Pancreas (tissue), 10 donors: ENCODE measurements at regions of chr10 and their contacts with region 1.

Region 1: GRCh38 chr10:94362360-94363250 is at the start of gene NOC3L:
- DNase-seq: peak; percentile 92 to 98 (median 95)
- ATAC-seq: peak; percentile 100
- H3K4me3 ChIP-seq: peak within 1 kb of the TSS; percentile 43 to 70 (median 64)
- H3K27ac ChIP-seq: peak within 1 kb of the TSS; percentile 25 to 66 (median 43)
- H3K4me1 ChIP-seq: peaks cover 4 to 14% (median 8%) of the 10 kb centered on the region in 3 donors
- H3K27me3 ChIP-seq: no peaks in the 10 kb centered on the region
- CTCF ChIP-seq: peak; percentile 80 to 94 (median 92)
- total RNA-seq, gene NOC3L: 3.3 to 9.4 (median 7.2) TPM

Region 2: GRCh38 chr10:94439275-94439861 is 76.8 kb after region 1 on chr10:
- intact Hi-C with region 1: loop called in 1 of 3 experiments (anchors 10 kb)
- DNase-seq: peak in 1 of 6 donors; percentile 6
- ATAC-seq: peak in 3 of 4 donors; percentile 50 to 68 (median 54)
- H3K4me3 ChIP-seq: no peak overlapping the region
- H3K27ac ChIP-seq: no peak overlapping the region
- H3K4me1 ChIP-seq: peaks cover 0 to 5% (median 0%) of the 10 kb centered on the region in 3 donors
- H3K27me3 ChIP-seq: no peaks in the 10 kb centered on the region
- CTCF ChIP-seq: no peak